Activated CD4-positive, alpha-beta memory T cell treated with anti-CD3 and anti-CD28 coated beads for 36 hours (primary cell): ENCODE measurements at regions of chr19 and their contacts with region 1.

Region 1: DNA sequence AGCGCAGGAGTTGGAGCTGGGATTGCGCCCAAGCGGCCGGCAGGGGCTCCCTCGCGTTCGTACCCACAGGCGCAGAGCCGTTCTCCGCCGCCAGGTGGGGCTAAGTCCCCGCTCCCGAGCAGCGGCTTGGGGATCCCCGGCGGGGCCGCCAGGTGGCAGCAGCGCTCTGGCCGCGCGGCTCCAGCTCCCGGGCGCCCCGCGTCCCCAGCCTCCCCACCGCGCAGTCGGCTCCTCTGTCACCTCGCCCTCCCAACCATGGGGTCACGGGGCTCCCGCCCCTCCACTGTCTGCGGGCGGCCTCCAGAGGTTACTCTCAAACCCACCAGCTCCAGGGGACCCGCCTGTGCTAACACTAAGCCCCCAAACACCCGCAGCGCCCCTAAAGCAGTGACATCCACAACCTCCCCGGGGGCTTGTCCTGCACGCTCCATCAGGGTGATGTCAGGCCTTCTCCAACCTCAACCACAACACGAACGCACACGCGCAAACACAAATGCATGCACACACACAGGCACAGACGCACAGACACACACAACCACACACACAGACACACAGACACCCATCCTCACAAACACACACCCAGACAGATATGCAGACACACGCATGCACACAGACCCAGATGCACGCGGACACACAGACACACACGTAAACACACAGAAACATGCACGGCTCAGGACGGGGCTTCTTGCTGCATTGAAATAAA is 18.4 kb upstream of the KCTD15 start:
- DNase-seq: peak; percentile 89
- H3K4me3 Mint-ChIP-seq: no peak overlapping the region
- H3K27ac Mint-ChIP-seq: no peak overlapping the region
- H3K4me1 Mint-ChIP-seq: peaks cover 5% of the 10 kb centered on the region
- H3K27me3 Mint-ChIP-seq: peaks cover 14% of the 10 kb centered on the region

Region 2: DNA sequence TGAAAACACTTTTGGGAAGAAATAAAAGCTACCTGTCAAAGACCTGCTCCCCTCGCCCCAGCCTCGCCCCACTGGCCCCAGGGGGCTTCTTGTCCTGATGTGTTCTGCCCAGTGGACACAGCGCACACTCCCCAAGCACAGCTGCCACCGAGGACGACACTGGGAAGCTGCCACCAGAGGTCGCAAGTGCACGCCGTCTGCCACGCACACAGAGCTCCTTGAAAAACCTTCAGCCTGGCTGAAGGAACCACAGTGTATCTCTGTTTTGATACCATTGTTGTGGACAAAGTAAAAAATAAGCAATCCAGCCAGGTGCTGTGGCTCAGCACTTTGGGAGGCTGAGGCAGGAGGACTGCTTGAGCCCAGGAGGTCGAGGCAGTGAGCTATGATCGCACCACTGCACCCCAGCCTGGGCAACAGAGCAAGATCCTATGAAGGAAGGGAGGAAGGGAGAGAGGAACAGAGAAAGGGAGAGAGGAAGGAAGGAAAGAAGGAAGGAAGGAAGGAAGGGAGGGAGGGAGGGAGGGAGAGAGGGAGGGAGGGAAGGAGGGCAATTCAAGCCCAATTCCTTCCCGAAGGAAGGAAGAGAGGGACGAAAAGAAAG is 347.5 kb before region 1 on chr19:
- CTCF ChIA-PET with region 1: interaction called, 11 read pairs
- POLR2A ChIA-PET with region 1: no interaction called
- intact Hi-C with region 1: no loop called
- DNase-seq: peak; percentile 80
- H3K4me3 Mint-ChIP-seq: no peak overlapping the region
- H3K27ac Mint-ChIP-seq: peak overlapping the region; percentile 52
- H3K4me1 Mint-ChIP-seq: peaks cover 6% of the 10 kb centered on the region
- H3K27me3 Mint-ChIP-seq: no peaks in the 10 kb centered on the region

Region 3: DNA sequence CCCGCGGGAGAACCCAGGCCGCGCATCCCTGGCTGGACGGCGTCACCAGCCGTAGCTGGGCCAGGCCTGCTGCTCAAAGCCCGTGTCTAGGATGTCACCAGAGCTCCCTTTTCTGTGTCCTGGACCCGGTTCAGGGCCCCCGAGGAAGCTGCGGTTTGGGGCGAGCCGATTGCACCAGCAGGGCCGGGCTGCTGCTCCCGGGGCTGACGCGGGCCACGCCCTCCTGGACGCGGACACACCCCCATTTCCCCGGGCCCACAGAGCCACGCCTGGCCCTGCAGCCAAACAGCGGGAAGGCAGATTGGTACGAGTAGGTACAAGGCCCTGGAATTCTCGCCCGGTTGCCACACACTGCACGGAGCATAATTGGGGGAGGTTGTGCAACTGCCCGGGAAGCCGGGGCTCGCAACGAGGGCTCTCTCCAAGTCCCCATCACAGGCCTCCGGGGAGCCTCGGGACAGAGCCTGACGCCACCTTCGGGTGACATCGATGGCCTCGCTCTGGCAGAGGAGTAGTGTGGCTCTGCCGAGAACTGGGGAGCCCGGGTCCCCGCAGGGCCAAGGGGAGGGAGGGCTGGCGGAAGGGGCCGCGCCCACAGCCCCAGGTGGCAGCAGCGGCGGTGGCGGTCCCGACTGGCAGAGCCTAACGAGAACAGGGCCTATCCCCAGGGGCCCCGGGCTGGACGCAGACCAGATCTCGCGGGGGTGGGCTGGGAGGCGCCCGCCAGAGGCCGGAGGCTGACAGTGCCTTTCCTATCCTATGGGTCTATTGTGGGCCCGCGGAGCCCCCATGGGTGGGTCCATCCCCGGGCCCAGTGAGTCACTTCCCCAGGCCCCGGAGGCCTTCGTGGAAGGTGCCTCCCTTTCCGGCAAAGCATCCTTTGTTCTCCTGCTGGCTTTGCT is 41.9 kb after region 1 on chr19:
- CTCF ChIA-PET with region 1: interaction called, 22 read pairs
- POLR2A ChIA-PET with region 1: no interaction called
- intact Hi-C with region 1: no loop called
- DNase-seq: peak; percentile 85
- H3K4me3 Mint-ChIP-seq: peak overlapping the region; percentile 76
- H3K27ac Mint-ChIP-seq: peak overlapping the region; percentile 59
- H3K4me1 Mint-ChIP-seq: peaks cover 19% of the 10 kb centered on the region
- H3K27me3 Mint-ChIP-seq: no peaks in the 10 kb centered on the region

Region 4: GRCh38 chr19:33998739-33999345 is 220.6 kb after region 1 on chr19:
- CTCF ChIA-PET with region 1: interaction called, 35 read pairs
- POLR2A ChIA-PET with region 1: no interaction called
- intact Hi-C with region 1: loop called (anchors 2 kb)
- DNase-seq: no peak
- H3K4me3 Mint-ChIP-seq: no peak overlapping the region
- H3K27ac Mint-ChIP-seq: no peak overlapping the region
- H3K4me1 Mint-ChIP-seq: no peaks in the 10 kb centered on the region
- H3K27me3 Mint-ChIP-seq: peaks cover 7% of the 10 kb centered on the region

Region 5: GRCh38 chr19:34104096-34104495 is 325.9 kb after region 1 on chr19:
- CTCF ChIA-PET with region 1: interaction called, 14 read pairs
- POLR2A ChIA-PET with region 1: no interaction called
- intact Hi-C with region 1: no loop called
- DNase-seq: no peak
- H3K4me3 Mint-ChIP-seq: no peak overlapping the region
- H3K27ac Mint-ChIP-seq: no peak overlapping the region
- H3K4me1 Mint-ChIP-seq: no peaks in the 10 kb centered on the region
- H3K27me3 Mint-ChIP-seq: peaks cover 11% of the 10 kb centered on the region

Region 6: DNA sequence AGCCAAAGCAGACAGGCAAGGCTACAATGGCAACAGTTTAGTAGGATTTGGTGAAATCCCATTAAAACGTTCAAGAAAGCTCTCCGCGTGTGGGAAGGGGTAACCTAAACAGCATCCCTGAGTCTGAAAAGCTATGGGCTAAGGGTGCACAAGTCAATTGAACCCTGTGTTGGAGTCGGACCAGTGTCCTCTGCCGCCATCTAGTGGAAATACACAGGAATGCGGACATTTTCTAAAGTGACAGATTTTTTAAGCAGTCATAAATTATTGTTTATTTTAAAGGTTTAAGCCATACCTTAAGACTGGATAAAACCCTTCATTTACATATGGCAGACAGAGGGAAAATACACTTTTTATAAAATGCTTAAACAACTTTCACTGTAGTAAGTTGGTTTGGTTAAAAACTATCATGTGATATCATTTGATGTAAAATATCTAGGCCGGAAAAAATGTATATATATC is 367.5 kb after region 1 on chr19:
- CTCF ChIA-PET with region 1: interaction called, 11 read pairs
- POLR2A ChIA-PET with region 1: no interaction called
- intact Hi-C with region 1: loop called (anchors 1 kb)
- DNase-seq: peak; percentile 66
- H3K4me3 Mint-ChIP-seq: no peak overlapping the region
- H3K27ac Mint-ChIP-seq: no peak overlapping the region
- H3K4me1 Mint-ChIP-seq: no peaks in the 10 kb centered on the region
- H3K27me3 Mint-ChIP-seq: no peaks in the 10 kb centered on the region